OCI-LY7 (cell line): ENCODE measurements at regions of chr4 and their contacts with region 1.

Region 1: GRCh38 chr4:2696423-2696822 is 59.7 kb downstream of the TNIP2 start:
- DNase-seq: peak; percentile 98
- H3K4me3 ChIP-seq: peak overlapping the region; percentile 60
- H3K27ac ChIP-seq: peak overlapping the region; percentile 93
- H3K4me1 ChIP-seq: peaks cover 58% of the 10 kb centered on the region
- CTCF ChIP-seq: peak; percentile 60

Region 2: GRCh38 chr4:2745981-2746806 is 49.8 kb after region 1 on chr4:
- CTCF ChIA-PET with region 1: no interaction called
- POLR2A ChIA-PET with region 1: no interaction called
- intact Hi-C with region 1: loop called (anchors 2 kb)
- DNase-seq: peak; percentile 79
- H3K4me3 ChIP-seq: no peak overlapping the region
- H3K27ac ChIP-seq: peak overlapping the region; percentile 37
- H3K4me1 ChIP-seq: peaks cover 36% of the 10 kb centered on the region
- CTCF ChIP-seq: no peak

Region 3: GRCh38 chr4:2954358-2955185 is 258.1 kb after region 1 on chr4:
- CTCF ChIA-PET with region 1: no interaction called
- POLR2A ChIA-PET with region 1: no interaction called
- intact Hi-C with region 1: loop called (anchors 5 kb)
- DNase-seq: peak; percentile 53
- H3K4me3 ChIP-seq: no peak overlapping the region
- H3K27ac ChIP-seq: peak overlapping the region; percentile 2
- H3K4me1 ChIP-seq: no peaks in the 10 kb centered on the region
- CTCF ChIP-seq: no peak